Psoas muscle (tissue), 8 donors: ENCODE measurements at regions of chr2 and their contacts with region 1.

Region 1: GRCh38 chr2:3476321-3476980 is 42.9 kb downstream of the ADI1 start:
- DNase-seq: peak; percentile 12 to 59
- ATAC-seq: peak; percentile 79 to 91 (median 85)
- H3K4me3 ChIP-seq: peak overlapping the region; percentile 22
- H3K27ac ChIP-seq: peak overlapping the region; percentile 81
- H3K4me1 ChIP-seq: peaks cover 40% of the 10 kb centered on the region
- H3K27me3 ChIP-seq: no peaks in the 10 kb centered on the region
- CTCF ChIP-seq: no peak

Region 2: GRCh38 chr2:3368261-3368722 is 108.2 kb before region 1 on chr2:
- intact Hi-C with region 1: no loop called
- DNase-seq: no peak
- ATAC-seq: no peak
- H3K4me3 ChIP-seq: no peak overlapping the region
- H3K27ac ChIP-seq: no peak overlapping the region
- H3K4me1 ChIP-seq: no peaks in the 10 kb centered on the region
- H3K27me3 ChIP-seq: no peaks in the 10 kb centered on the region
- CTCF ChIP-seq: no peak

Region 3: GRCh38 chr2:3512086-3512485 is 35.6 kb after region 1 on chr2:
- intact Hi-C with region 1: loop called (anchors 5 kb)
- DNase-seq: no peak
- ATAC-seq: no peak
- H3K4me3 ChIP-seq: no peak overlapping the region
- H3K27ac ChIP-seq: no peak overlapping the region
- H3K4me1 ChIP-seq: peaks cover under 1% of the 10 kb centered on the region
- H3K27me3 ChIP-seq: no peaks in the 10 kb centered on the region
- CTCF ChIP-seq: no peak

Region 4: DNA sequence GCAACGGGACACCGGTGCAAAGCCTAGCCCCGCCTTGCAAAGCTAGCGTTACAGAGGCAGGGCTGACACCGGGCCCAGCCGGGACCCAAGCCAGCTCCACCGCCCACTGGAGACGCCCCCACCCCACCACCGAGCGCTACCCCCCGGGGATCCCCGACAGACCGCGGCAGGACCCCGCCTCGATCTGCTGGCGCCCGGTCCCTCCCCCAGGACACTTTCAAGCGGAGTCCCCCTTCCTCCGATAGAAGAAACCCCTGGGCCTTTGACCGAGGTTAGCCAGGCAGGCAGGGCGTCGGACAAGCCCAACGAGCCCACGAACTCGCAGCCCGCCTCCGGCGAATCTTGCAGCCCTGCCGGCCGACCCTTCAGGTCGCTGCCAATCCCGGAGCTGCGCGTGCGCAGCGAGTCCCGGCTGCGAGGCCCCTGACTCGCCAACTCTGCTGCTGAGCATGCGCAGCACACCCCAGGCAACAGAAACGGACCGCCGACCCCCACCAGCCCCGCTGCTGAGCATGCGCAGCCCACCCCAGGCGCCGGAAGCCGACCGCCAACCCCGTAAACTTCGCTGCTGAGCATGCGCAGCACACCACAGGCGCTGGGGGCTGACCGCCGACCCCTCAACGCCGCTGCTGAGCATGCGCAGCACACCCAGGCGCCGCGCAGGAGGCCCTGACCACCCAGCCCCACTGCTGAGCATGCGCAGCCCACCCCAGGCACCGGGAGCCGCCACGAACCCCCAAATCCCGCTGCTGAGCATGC is 42.2 kb after region 1 on chr2:
- intact Hi-C with region 1: loop called (anchors 5 kb)
- DNase-seq: peak; percentile 99 to 100
- ATAC-seq: peak; percentile 95 to 96 (median 96)
- H3K4me3 ChIP-seq: peak overlapping the region; percentile 92
- H3K27ac ChIP-seq: peak overlapping the region; percentile 99
- H3K4me1 ChIP-seq: peaks cover 29% of the 10 kb centered on the region
- H3K27me3 ChIP-seq: no peaks in the 10 kb centered on the region
- CTCF ChIP-seq: no peak